Activated CD4-positive, alpha-beta memory T cell treated with anti-CD3 and anti-CD28 coated beads for 36 hours (primary cell): ENCODE measurements at regions of chr1 and their contacts with region 1.

Region 1: DNA sequence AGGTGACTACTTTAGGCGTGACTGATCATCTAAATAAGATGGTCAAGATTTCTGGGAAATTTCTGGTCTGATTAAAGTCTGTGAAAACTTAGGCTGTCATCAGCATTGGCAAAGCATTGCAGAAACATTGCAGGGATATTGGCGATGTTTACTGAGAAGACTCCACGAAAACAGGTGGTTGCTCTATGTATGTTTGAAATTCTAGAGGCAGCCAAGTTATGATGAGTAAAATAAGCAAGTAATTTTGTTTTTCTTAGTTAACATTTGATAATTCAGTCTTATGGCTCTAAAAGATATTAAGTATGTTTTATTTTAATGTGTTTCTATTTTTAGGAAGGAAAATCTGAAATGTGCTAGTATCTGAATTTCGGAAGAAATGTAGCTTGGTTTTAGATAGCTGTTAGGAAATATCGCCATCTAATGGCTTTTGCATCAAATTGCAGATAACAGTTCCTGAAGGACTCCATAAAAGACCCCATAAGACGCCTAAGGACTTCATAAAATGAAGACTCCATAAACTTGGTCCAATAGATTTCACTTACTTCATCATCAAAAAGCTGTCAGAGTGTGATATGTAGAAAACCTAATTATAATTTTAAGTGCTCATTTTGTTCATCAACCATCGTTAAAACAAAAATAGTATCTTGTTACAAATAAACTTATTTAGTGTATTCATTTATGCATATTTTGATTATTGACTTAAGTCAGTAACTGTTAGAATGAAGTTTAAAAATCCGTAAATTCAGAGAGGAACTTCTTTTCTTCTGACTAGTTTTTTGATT is 344.6 kb downstream of the RYR2 start:
- DNase-seq: no peak
- H3K4me3 Mint-ChIP-seq: no peak overlapping the region
- H3K27ac Mint-ChIP-seq: no peak overlapping the region
- H3K4me1 Mint-ChIP-seq: no peaks in the 10 kb centered on the region
- H3K27me3 Mint-ChIP-seq: peaks cover 4% of the 10 kb centered on the region

Region 2: DNA sequence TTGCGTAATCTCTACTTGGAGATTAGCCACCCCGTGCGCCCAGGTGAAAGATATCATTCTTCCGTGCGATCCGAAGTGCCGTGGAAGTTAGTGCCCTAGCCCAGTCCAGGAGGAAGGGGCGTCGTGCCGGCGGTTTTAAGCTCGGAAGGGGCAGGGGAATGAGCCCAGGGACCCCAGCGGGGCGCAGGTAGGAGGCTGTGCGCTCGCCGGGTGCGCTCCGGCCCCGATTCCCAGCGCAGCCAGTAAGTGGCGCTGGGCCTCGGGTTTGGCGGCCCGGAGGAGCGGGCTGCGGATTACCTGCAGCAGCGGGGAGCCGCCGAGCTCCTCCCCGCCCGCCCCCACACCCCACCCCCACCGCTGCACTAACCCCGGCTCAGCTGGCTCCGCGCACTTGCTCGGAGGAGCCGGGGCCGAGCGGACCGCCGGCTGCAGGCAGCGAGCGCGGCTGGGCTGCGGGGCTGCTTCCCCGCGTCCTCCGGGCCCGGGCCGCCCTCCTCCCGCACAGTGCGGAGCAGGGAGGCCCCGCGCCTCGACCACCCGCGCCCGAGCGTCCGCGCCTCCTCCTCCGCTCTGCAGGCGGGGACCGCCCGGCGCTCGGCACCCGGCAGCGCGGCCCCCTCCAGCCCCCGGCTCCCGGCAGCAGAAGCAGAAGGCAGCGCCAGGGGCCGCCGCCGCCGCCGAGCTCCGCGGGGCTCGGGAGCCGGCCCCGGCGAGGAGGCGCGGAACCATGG is 344.6 kb before region 1 on chr1 and contains the start of gene RYR2:
- CTCF ChIA-PET with region 1: interaction called, 3 read pairs
- POLR2A ChIA-PET with region 1: no interaction called
- intact Hi-C with region 1: loop called (anchors 5 kb)
- DNase-seq: peak; percentile 16
- H3K4me3 Mint-ChIP-seq: peak within 1 kb of the TSS; percentile 40
- H3K27ac Mint-ChIP-seq: no peak within 1 kb of the TSS
- H3K4me1 Mint-ChIP-seq: peaks cover 21% of the 10 kb centered on the region
- H3K27me3 Mint-ChIP-seq: peaks cover 51% of the 10 kb centered on the region
- total RNA-seq, gene RYR2: 0.02 TPM

Region 3: GRCh38 chr1:237444120-237444790 is 57.7 kb after region 1 on chr1:
- CTCF ChIA-PET with region 1: no interaction called
- POLR2A ChIA-PET with region 1: no interaction called
- intact Hi-C with region 1: no loop called
- DNase-seq: no peak
- H3K4me3 Mint-ChIP-seq: no peak overlapping the region
- H3K27ac Mint-ChIP-seq: no peak overlapping the region
- H3K4me1 Mint-ChIP-seq: peaks cover 4% of the 10 kb centered on the region
- H3K27me3 Mint-ChIP-seq: peaks cover 4% of the 10 kb centered on the region

Region 4: GRCh38 chr1:237562242-237562823 is 175.8 kb after region 1 on chr1:
- CTCF ChIA-PET with region 1: interaction called, 12 read pairs
- POLR2A ChIA-PET with region 1: no interaction called
- intact Hi-C with region 1: no loop called
- DNase-seq: no peak
- H3K4me3 Mint-ChIP-seq: no peak overlapping the region
- H3K27ac Mint-ChIP-seq: no peak overlapping the region
- H3K4me1 Mint-ChIP-seq: no peaks in the 10 kb centered on the region
- H3K27me3 Mint-ChIP-seq: peaks cover 17% of the 10 kb centered on the region